Activated naive CD4-positive, alpha-beta T cell treated with anti-CD3 and anti-CD28 coated beads for 36 hours (primary cell): ENCODE measurements at regions of chr17 and their contacts with region 1.

Region 1: DNA sequence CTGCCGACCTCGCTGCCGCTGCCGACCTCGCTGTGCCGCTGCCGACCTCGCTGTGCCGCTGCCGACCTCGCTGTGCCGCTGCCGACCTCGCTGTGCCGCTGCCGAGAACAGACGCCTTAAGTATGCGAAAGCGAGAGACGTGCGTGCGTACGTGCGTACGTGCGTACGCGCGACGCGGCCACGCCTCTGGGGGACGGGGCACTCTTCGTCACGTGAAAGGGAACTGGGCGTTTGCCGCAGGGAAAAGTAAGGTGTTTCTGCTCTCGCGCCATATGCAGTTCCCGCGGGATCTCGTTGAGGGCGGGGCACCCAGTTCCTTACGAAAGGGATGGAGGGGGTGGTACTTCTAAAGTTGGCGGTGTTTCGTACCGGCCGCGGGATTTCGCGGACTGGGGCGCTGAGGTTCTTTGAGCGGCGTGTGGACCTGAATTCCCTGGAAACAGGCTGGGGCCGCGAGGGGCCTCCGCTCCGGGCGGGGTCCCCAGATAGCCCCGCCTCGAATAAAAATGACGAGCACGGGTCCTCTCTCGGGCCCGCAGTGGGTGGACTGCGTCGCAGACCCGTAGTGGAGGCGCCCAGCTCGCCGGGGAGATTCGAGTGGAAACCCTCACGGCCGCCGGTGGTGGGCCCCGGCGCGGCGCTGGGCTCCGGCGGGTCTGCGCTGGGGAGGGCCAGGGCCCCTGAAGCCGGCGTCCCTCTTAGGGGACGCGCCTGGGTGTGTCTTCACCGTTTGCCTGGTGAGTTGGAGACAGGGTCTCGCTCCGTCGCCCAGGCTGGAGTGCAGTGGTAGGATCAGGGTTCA is at the start of gene EIF4A3:
- DNase-seq: peak; percentile 99
- H3K4me3 Mint-ChIP-seq: peak within 1 kb of the TSS; percentile 94
- H3K27ac Mint-ChIP-seq: peak within 1 kb of the TSS; percentile 89
- H3K4me1 Mint-ChIP-seq: peaks cover 42% of the 10 kb centered on the region
- H3K27me3 Mint-ChIP-seq: no peaks in the 10 kb centered on the region
- total RNA-seq, gene EIF4A3: 92.1 to 97.7 TPM

Region 2: DNA sequence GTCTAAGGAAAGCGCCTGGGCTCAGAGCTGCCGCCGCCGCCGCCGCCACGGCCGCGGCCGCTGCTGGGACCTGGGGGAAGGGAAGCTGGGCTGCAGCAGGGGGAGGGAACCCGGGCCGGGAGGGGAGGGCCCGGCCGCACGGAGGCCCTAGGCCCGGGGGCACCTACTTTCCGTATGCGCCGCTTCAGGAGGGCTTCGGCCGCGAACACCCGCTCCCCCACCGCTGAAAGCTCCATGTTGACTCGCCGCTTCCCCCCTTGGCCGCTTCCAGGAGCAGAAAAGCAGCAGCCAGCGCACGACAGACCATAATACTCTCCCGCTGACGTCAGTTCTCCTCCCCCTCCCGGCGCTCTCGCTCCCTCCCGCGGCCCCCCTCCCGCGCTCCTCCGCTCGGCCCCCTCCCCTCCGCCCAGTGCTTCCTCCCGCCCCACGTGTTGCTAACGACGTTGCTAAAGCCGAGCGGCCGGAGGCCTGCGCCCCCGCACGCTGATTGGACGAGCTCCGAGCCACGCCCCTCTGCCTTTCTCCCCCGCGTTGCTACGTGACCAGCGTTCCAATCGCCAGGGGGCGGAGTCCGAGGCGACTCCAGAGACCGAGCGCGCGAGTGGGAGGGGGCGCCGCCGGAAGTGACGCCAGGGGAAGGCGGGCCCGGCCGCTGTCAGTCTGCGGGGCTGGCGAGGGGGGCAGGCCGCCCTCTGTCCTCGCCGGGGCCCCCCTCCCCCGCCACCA is 350.3 kb before region 1 on chr17 and contains the start of gene CBX8:
- CTCF ChIA-PET with region 1: no interaction called
- intact Hi-C with region 1: loop called (anchors 5 kb)
- DNase-seq: peak; percentile 100
- H3K4me3 Mint-ChIP-seq: peak within 1 kb of the TSS; percentile 77
- H3K27ac Mint-ChIP-seq: no peak within 1 kb of the TSS
- H3K4me1 Mint-ChIP-seq: peaks cover 37% of the 10 kb centered on the region
- H3K27me3 Mint-ChIP-seq: peaks cover 36% of the 10 kb centered on the region
- total RNA-seq, gene CBX8: 3.8 to 3.9 TPM

Region 3: GRCh38 chr17:80008383-80008840 is 138.8 kb before region 1 on chr17:
- CTCF ChIA-PET with region 1: interaction called, 5 read pairs
- intact Hi-C with region 1: loop called (anchors 5 kb)
- DNase-seq: peak; percentile 86
- H3K4me3 Mint-ChIP-seq: no peak overlapping the region
- H3K27ac Mint-ChIP-seq: no peak overlapping the region
- H3K4me1 Mint-ChIP-seq: peaks cover 6% of the 10 kb centered on the region
- H3K27me3 Mint-ChIP-seq: no peaks in the 10 kb centered on the region

Region 4: GRCh38 chr17:80082403-80083135 is 64.7 kb before region 1 on chr17:
- CTCF ChIA-PET with region 1: interaction called, 9 read pairs
- intact Hi-C with region 1: loop called (anchors 5 kb)
- DNase-seq: peak; percentile 76
- H3K4me3 Mint-ChIP-seq: no peak overlapping the region
- H3K27ac Mint-ChIP-seq: no peak overlapping the region
- H3K4me1 Mint-ChIP-seq: peaks cover 3% of the 10 kb centered on the region
- H3K27me3 Mint-ChIP-seq: no peaks in the 10 kb centered on the region

Region 5: GRCh38 chr17:80101011-80101945 is 46.0 kb before region 1 on chr17 and contains the start of gene GAA:
- CTCF ChIA-PET with region 1: interaction called, 8 read pairs
- intact Hi-C with region 1: loop called (anchors 1 kb)
- DNase-seq: peak; percentile 84
- H3K4me3 Mint-ChIP-seq: peak within 1 kb of the TSS; percentile 92
- H3K27ac Mint-ChIP-seq: peak within 1 kb of the TSS; percentile 59
- H3K4me1 Mint-ChIP-seq: peaks cover 28% of the 10 kb centered on the region
- H3K27me3 Mint-ChIP-seq: no peaks in the 10 kb centered on the region
- total RNA-seq, gene GAA: 32.1 to 33.2 TPM

Region 6: GRCh38 chr17:80187515-80187941 is 40.3 kb after region 1 on chr17:
- CTCF ChIA-PET with region 1: no interaction called
- intact Hi-C with region 1: no loop called
- DNase-seq: no peak
- H3K4me3 Mint-ChIP-seq: no peak overlapping the region
- H3K27ac Mint-ChIP-seq: no peak overlapping the region
- H3K4me1 Mint-ChIP-seq: no peaks in the 10 kb centered on the region
- H3K27me3 Mint-ChIP-seq: no peaks in the 10 kb centered on the region

Region 7: GRCh38 chr17:80203471-80203963 is 56.3 kb after region 1 on chr17:
- CTCF ChIA-PET with region 1: no interaction called
- intact Hi-C with region 1: no loop called
- DNase-seq: no peak
- H3K4me3 Mint-ChIP-seq: no peak overlapping the region
- H3K27ac Mint-ChIP-seq: no peak overlapping the region
- H3K4me1 Mint-ChIP-seq: no peaks in the 10 kb centered on the region
- H3K27me3 Mint-ChIP-seq: no peaks in the 10 kb centered on the region

Region 8: GRCh38 chr17:80219013-80219762 is 72.0 kb after region 1 on chr17:
- CTCF ChIA-PET with region 1: no interaction called
- intact Hi-C with region 1: loop called (anchors 1 kb)
- DNase-seq: peak; percentile 97
- H3K4me3 Mint-ChIP-seq: peak overlapping the region; percentile 88
- H3K27ac Mint-ChIP-seq: peak overlapping the region; percentile 88
- H3K4me1 Mint-ChIP-seq: peaks cover 19% of the 10 kb centered on the region
- H3K27me3 Mint-ChIP-seq: no peaks in the 10 kb centered on the region

Region 9: GRCh38 chr17:80454557-80455335 is 307.5 kb after region 1 on chr17:
- CTCF ChIA-PET with region 1: no interaction called
- intact Hi-C with region 1: loop called (anchors 1 kb)
- DNase-seq: peak; percentile 97
- H3K4me3 Mint-ChIP-seq: peak overlapping the region; percentile 98
- H3K27ac Mint-ChIP-seq: peak overlapping the region; percentile 98
- H3K4me1 Mint-ChIP-seq: peaks cover 18% of the 10 kb centered on the region
- H3K27me3 Mint-ChIP-seq: peaks cover 6% of the 10 kb centered on the region